ENCODE measurements at regions of chr12 and their contacts with region 1.

Region 1: DNA sequence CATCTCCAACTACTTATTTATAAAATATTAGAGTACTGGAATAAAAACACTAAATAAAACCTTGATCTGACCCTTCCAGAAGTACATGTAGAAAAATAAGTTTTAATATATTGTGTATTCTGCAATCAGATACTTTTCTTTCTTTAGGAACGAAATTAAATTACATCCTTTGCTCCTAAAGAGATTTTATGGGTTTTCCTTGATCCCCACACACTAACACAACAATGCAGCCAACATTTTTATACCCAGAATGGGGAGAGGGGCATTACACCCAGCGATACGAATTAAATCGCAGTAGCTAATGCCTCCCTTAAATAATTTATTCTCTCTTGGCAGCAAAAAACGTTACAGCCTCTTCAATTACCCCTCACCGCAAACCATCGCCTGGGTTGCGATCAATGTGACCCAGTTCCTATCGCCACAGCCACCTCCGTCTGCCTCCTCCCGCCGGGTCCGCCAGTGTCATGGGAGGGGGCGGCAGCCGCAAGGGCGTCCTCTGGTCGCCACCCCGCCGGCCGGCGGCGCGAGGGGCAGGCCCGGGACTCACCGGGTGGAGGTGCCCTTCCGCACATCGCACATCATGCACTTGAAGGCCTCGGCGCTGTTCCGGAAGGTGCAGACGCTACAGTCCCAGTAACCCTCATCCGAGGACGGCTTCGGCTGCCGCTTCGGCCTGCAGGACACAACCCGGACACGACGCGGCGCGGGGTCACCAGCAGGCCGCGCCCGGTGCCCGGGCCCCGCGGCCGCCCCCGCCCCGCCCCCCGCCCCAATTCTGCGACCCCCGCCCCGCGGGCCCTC is 796 bp downstream of the YAF2 start:
- DNase-seq: peak; percentile 84
- ATAC-seq: peak; percentile 74
- H3K4me3 ChIP-seq: peak overlapping the region; percentile 48 to 84 (median 66)
- H3K4me3 Mint-ChIP-seq: peak overlapping the region; percentile 98
- H3K27ac ChIP-seq: peak overlapping the region; percentile 28 to 74
- H3K27ac Mint-ChIP-seq: peak overlapping the region; percentile 95
- H3K4me1 ChIP-seq: peaks cover 15 to 27% of the 10 kb centered on the region in 2 donors
- H3K4me1 Mint-ChIP-seq: peaks cover 35% of the 10 kb centered on the region
- H3K27me3 ChIP-seq: no peaks in the 10 kb centered on the region
- H3K27me3 Mint-ChIP-seq: no peaks in the 10 kb centered on the region
- CTCF ChIP-seq: peak; percentile 53

Region 2: DNA sequence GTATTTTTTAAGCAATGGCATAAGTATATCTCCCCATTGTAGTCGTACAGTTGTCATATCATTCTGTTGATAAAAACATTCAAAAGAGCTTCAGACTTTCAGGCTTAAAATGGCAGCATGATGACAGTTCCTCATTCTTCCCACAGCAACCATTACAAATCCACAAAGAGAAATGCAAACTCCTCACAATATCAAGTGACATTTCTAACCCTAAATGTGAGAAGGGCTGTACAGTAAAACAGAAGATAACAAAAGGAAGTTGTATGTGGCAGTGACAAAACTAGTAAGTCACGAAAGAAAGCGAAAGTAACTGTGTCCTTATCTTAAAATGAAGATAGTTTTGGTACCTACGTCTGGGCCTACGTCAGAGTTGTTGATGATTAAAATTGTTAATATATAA is 139.3 kb before region 1 on chr12:
- CTCF ChIA-PET with region 1: no interaction called
- POLR2A ChIA-PET with region 1: no interaction called
- intact Hi-C with region 1: loop called (anchors 5 kb)
- DNase-seq: peak; percentile 74
- ATAC-seq: peak; percentile 73
- H3K4me3 ChIP-seq: peak overlapping the region in 4 of 5 experiments; percentile 13 to 70 (median 34)
- H3K4me3 Mint-ChIP-seq: peak overlapping the region; percentile 88
- H3K27ac ChIP-seq: peak overlapping the region; percentile 72 to 94
- H3K27ac Mint-ChIP-seq: peak overlapping the region; percentile 92
- H3K4me1 ChIP-seq: peaks cover 3 to 8% of the 10 kb centered on the region in 2 donors
- H3K4me1 Mint-ChIP-seq: peaks cover 30% of the 10 kb centered on the region
- H3K27me3 ChIP-seq: no peaks in the 10 kb centered on the region
- H3K27me3 Mint-ChIP-seq: no peaks in the 10 kb centered on the region
- CTCF ChIP-seq: no peak

Region 3: DNA sequence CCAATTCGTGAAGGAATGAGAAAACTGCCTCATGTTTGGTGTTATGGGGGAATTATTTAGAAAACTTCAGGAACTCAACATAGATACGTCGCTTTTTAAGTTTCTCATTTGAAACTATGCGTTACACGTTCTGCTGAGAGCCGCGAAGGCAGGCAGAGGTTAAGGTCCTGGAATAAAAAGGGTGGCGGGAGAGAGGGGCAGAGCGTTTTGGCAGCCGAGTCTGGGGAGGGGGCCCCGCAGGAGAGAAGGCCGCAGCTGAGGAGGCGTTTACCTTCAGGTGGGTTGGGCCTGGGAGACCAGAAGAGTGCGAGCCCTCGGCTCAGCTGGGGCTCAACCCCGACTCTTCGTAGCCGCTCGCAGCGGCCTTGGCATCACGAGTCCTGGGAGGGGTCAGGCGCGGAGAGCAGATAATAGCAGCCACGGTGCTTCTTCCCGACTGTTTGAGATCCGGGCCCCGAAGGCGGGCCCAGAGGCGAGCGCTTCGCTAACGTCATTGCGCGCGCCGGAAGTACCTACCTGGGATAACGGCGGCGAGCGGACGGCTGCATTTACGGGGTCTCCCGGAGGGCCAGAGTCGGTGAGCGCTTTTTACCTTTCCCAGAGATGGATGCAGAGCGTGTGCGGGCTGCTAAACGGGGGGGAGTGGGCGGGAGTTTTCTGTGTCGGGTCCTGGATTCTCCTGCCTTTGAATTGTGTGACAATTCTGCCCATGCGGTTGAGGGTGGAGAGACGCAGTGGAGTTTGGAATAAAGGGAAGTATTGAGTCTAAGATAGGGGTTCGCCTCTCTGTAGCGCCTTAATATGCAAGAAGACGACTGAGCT is 88.6 kb after region 1 on chr12 and contains the starts of genes PPHLN1 and ZCRB1:
- CTCF ChIA-PET with region 1: interaction called, 3 read pairs
- POLR2A ChIA-PET with region 1: interaction called, 3 read pairs
- intact Hi-C with region 1: loop called (anchors 1 kb)
- DNase-seq: peak; percentile 87
- ATAC-seq: peak; percentile 88
- H3K4me3 ChIP-seq: peak within 1 kb of the TSS; percentile 60 to 98 (median 84)
- H3K4me3 Mint-ChIP-seq: peak within 1 kb of the TSS; percentile 95
- H3K27ac ChIP-seq: peak within 1 kb of the TSS; percentile 64 to 92
- H3K27ac Mint-ChIP-seq: peak within 1 kb of the TSS; percentile 96
- H3K4me1 ChIP-seq: peaks cover 29 to 39% of the 10 kb centered on the region in 2 donors
- H3K4me1 Mint-ChIP-seq: peaks cover 53% of the 10 kb centered on the region
- H3K27me3 ChIP-seq: no peaks in the 10 kb centered on the region
- H3K27me3 Mint-ChIP-seq: no peaks in the 10 kb centered on the region
- CTCF ChIP-seq: no peak
- total RNA-seq, gene PPHLN1: 99.5 and 104 TPM in 2 replicates
- total RNA-seq, gene ZCRB1: 23.2 and 27.1 TPM in 2 replicates

Measured in B cell (primary cell).